ENCODE measurements at regions of chr12 and their contacts with region 1.

Region 1: GRCh38 chr12:88035271-88035906 is 6.2 kb upstream of the C12orf50 start:
- H3K4me3 Mint-ChIP-seq: peak overlapping the region; percentile 99
- H3K27ac Mint-ChIP-seq: peak overlapping the region; percentile 87
- H3K4me1 Mint-ChIP-seq: peaks cover 10% of the 10 kb centered on the region
- H3K27me3 Mint-ChIP-seq: no peaks in the 10 kb centered on the region

Region 2: DNA sequence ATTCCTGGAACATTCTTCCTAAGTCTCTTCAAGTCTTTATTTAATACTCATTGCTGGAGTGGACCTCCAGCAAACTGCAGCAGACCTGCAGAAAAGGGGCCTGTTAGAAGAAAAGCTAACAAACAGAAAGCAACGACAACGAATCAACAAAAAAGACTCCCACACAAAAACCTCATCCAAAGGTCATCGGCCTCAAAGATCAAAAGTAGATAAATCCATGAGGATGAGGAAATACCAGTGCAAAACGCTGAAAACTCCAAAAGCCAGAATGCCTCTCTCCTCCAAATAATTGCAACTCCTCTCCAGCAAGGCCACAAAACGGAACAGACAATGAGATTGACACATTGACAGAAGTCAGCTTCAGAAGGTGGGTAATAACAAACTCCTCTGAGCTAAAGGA is 478.4 kb before region 1 on chr12:
- intact Hi-C with region 1: no loop called
- H3K4me3 Mint-ChIP-seq: no peak overlapping the region
- H3K27ac Mint-ChIP-seq: no peak overlapping the region
- H3K4me1 Mint-ChIP-seq: no peaks in the 10 kb centered on the region
- H3K27me3 Mint-ChIP-seq: no peaks in the 10 kb centered on the region

Region 3: GRCh38 chr12:88141770-88142609 is 106.6 kb after region 1 on chr12 and contains the starts of genes CEP290 and TMTC3:
- intact Hi-C with region 1: loop called (anchors 1 kb)
- H3K4me3 Mint-ChIP-seq: peak within 1 kb of the TSS; percentile 86
- H3K27ac Mint-ChIP-seq: peak within 1 kb of the TSS; percentile 85
- H3K4me1 Mint-ChIP-seq: peaks cover 20% of the 10 kb centered on the region
- H3K27me3 Mint-ChIP-seq: no peaks in the 10 kb centered on the region

Measured in dendritic cell treated with granulocyte-macrophage colony-stimulating factor and Interleukin-4, amounts not matched to agents 40 ng/mL and 50 ng/mL, for 4 days (primary cell).